Psoas muscle (tissue), 8 donors: ENCODE measurements at regions of chr3 and their contacts with region 1.

Region 1: GRCh38 chr3:64915778-64916177 is 228.0 kb upstream of the ADAMTS9 start:
- DNase-seq: no peak
- ATAC-seq: peak in 3 of 4 donors; percentile 59 to 83 (median 59)
- H3K4me3 ChIP-seq: no peak overlapping the region
- H3K27ac ChIP-seq: peak overlapping the region; percentile 23
- H3K4me1 ChIP-seq: peaks cover 5% of the 10 kb centered on the region
- H3K27me3 ChIP-seq: no peaks in the 10 kb centered on the region
- CTCF ChIP-seq: no peak

Region 2: GRCh38 chr3:64533617-64534317 is 382.0 kb before region 1 on chr3:
- intact Hi-C with region 1: no loop called
- DNase-seq: peak; percentile 82 to 93
- ATAC-seq: peak; percentile 97 to 98 (median 98)
- H3K4me3 ChIP-seq: peak overlapping the region; percentile 13
- H3K27ac ChIP-seq: no peak overlapping the region
- H3K4me1 ChIP-seq: no peaks in the 10 kb centered on the region
- H3K27me3 ChIP-seq: no peaks in the 10 kb centered on the region
- CTCF ChIP-seq: peak; percentile 90

Region 3: DNA sequence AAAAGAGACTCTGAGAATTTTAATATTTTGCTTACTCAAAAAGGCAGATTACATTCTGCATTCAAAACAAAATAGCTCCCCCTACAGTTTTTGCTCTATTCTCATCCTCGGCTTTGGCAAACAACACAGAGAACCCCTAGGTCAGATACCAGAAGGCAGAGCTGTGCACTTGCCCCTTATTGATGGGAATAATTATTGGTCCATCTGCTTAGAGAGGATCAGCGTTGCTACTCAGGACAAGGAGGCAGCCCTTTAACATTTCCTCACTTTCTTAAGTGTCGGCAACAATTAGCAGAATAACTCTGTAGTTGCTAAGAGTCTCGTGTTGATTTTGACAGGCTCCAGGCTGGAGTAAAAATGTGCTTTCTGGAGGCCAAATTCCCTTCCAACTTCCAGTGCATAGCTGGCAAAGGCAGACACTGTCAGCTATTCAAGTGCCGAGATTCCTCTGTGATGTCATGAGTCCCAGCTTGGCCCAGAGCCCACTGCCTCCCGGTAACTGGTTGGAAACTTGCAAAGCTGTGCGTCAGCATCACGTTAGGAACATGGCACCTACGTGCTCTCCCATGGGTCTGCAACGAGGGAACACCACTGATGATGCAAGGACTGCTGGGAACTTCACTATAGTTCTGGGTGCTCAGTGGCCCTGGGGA is 254.7 kb after region 1 on chr3:
- intact Hi-C with region 1: loop called in 1 of 2 experiments (anchors 10 kb)
- DNase-seq: peak; percentile 84 to 92
- ATAC-seq: peak; percentile 49 to 92 (median 78)
- H3K4me3 ChIP-seq: no peak overlapping the region
- H3K27ac ChIP-seq: peak overlapping the region; percentile 59
- H3K4me1 ChIP-seq: no peaks in the 10 kb centered on the region
- H3K27me3 ChIP-seq: no peaks in the 10 kb centered on the region
- CTCF ChIP-seq: peak; percentile 47